Thyroid gland (tissue), 4 donors: ENCODE measurements at regions of chr6 and their contacts with region 1.

Region 1: GRCh38 chr6:42075159-42075838 is 25.0 kb downstream of the TAF8 start:
- DNase-seq: peak; percentile 94 to 97
- H3K4me3 ChIP-seq: no peak overlapping the region
- H3K27ac ChIP-seq: peak overlapping the region; percentile 73 to 78 (median 77)
- H3K4me1 ChIP-seq: peaks cover 15% of the 10 kb centered on the region in 2 donors
- H3K27me3 ChIP-seq: no peaks in the 10 kb centered on the region
- CTCF ChIP-seq: peak; percentile 54 to 98 (median 90)
- POLR2A ChIP-seq: no peak

Region 2: GRCh38 chr6:41958022-41958856 is 117.1 kb before region 1 on chr6:
- intact Hi-C with region 1: no loop called
- DNase-seq: no peak
- H3K4me3 ChIP-seq: no peak overlapping the region
- H3K27ac ChIP-seq: no peak overlapping the region
- H3K4me1 ChIP-seq: no peaks in the 10 kb centered on the region
- H3K27me3 ChIP-seq: no peaks in the 10 kb centered on the region
- CTCF ChIP-seq: no peak
- POLR2A ChIP-seq: no peak

Region 3: DNA sequence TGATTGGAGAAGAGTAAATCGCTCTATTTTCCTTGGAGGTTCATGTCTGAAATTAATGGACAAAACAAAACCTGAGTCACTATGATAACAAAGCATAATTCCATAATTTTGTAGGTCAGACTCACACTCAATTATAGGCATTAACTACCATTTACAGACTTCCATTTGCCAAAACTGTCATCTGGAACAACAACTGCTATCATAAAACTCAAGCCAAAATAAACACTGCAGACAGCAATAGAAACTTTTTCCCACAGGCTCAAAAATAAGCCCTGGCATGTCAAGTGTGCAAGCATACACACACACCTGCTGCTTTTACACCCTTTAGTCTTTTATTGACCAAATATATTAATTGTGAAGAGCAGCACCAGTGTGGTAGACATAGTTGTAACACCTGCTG is 135.3 kb after region 1 on chr6:
- intact Hi-C with region 1: loop called (anchors 5 kb)
- DNase-seq: no peak
- H3K4me3 ChIP-seq: no peak overlapping the region
- H3K27ac ChIP-seq: peak overlapping the region in 1 of 3 donors; percentile 7
- H3K4me1 ChIP-seq: peaks cover 0 to 6% of the 10 kb centered on the region in 2 donors
- H3K27me3 ChIP-seq: no peaks in the 10 kb centered on the region
- CTCF ChIP-seq: no peak
- POLR2A ChIP-seq: no peak